Sigmoid colon (tissue), 7 donors: ENCODE measurements at regions of chr11 and their contacts with region 1.

Region 1: DNA sequence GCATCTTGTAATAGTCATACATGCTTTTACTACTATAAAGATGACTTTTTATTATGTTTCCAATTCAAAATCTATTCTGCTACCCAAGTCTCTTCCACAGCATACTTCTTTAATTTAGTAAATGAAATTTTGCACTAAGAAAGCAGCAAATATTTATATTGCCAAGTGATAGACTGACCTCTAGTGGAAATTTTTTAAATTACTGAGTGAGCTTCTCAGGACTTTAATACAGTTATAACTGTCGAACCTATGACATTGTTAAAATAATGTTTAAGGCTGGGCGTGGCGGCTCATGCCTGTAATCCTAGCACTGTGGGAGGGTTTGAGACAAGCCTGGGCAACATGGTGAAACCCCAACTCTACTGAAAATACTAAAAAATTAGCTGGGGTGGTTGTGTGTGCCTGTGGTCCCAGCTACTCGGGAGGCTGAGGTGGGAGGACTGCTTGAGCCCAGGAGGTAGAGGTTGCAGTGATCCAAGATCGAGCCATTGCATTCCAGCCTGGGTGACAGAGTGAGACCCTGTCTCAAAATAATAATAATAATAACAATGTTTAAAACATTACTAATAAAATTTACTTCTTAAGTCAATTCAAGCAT is 27.3 kb downstream of the STK33 start:
- DNase-seq: no peak
- H3K4me3 ChIP-seq: no peak overlapping the region
- H3K27ac ChIP-seq: no peak overlapping the region
- H3K4me1 ChIP-seq: no peaks in the 10 kb centered on the region
- H3K27me3 ChIP-seq: no peaks in the 10 kb centered on the region
- CTCF ChIP-seq: peak; percentile 44 to 65 (median 54)
- EP300 ChIP-seq: no peak
- POLR2A ChIP-seq: no peak

Region 2: DNA sequence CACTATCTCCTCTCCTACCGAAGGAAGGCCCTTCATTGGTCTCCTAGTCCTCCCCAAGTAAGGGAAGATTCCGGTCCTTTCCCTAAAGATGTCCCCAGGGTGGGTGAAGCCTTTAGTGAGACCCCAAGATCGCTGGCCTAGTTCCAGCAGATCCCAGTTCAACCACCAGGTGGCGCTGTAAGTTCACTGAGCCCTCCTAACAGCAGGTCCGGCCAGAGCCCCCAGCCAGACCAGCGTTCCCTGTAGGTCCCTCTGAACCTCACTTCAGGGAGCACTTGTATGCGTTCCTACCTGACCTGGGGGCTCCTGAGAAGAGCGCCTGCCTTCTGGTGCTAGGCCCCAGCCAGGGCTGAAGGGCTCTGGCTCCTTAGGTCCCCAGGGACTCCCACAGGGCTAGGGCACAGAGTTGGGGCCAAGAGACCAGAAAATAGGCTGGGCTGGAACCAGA is 341.1 kb before region 1 on chr11:
- intact Hi-C with region 1: loop called (anchors 1 kb)
- DNase-seq: peak; percentile 83
- H3K4me3 ChIP-seq: no peak overlapping the region
- H3K27ac ChIP-seq: no peak overlapping the region
- H3K4me1 ChIP-seq: peaks cover 0 to 13% (median 3%) of the 10 kb centered on the region in 4 donors
- H3K27me3 ChIP-seq: no peaks in the 10 kb centered on the region
- CTCF ChIP-seq: peak; percentile 78 to 96 (median 90)
- EP300 ChIP-seq: no peak
- POLR2A ChIP-seq: no peak

Region 3: DNA sequence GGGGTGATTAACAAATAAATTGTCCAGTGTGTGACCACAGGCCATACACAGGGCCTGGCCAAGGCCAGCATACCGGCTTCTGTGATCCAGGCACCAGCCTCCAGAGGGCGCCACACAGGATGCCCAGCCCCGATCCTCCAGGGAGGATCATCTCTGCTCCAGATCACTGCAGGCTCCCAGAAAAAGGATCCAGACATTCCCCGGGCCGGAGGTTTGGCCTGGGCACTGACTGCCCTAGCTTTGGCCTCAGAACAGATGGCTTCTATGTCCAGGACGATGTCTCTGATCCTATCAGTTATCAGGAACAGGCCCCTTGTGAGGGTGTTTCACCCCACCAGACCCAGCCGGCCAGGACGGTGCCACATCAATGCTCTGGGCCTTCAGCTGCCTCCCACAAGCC is 228.6 kb before region 1 on chr11:
- intact Hi-C with region 1: loop called (anchors 5 kb)
- DNase-seq: no peak
- H3K4me3 ChIP-seq: no peak overlapping the region
- H3K27ac ChIP-seq: no peak overlapping the region
- H3K4me1 ChIP-seq: no peaks in the 10 kb centered on the region
- H3K27me3 ChIP-seq: no peaks in the 10 kb centered on the region
- CTCF ChIP-seq: peak in 3 of 4 experiments; percentile 29 to 60 (median 45)
- EP300 ChIP-seq: no peak
- POLR2A ChIP-seq: no peak

Region 4: DNA sequence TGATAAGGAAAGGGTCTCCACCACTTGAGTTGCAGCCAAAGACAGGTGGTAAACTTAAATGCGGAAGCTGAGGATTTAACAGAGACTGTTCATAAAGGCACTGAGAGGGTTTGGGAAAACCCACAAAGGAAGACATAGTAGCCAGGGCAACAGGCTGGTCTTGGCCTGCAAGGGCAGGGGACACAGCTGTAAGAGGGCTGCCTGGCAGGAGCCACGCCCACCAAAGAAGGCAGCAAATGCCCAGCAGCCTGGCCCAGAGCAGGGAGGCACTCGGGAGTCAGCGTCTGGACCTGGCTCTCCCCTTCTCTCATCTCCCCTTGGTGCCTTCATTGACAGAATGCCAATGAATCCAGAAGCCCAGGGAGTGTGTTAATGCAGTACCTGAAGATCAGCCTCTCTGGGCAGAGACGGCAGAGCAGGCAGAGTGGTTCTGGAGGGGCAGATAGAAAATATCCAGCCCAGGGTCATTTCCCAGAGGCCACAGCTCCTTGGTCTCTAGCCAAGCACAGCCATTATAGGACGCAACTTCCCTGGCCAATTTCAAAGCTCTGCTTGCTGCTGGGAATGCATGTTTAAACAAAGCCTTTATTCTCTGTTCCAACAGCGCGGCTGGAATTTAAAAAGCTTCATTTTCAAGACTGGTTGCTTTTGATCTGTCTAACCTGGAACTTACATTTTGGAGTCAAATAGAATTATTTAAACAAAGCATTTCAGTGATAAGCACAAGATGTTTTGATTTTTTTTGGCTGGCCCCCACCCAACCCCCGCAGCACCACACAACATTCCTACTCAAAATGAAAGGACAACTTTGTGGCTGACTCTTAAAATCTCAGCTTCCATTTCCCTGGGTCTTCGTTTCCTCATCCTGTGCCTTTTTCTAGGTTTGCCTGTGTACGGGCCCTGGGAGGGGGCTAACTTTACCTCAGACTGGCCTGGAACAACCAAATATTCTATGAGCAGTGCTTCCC is 177.4 kb before region 1 on chr11:
- intact Hi-C with region 1: loop called (anchors 5 kb)
- DNase-seq: no peak
- H3K4me3 ChIP-seq: peak overlapping the region in 3 of 4 donors; percentile 17 to 31 (median 31)
- H3K27ac ChIP-seq: peak overlapping the region; percentile 56 to 82 (median 78)
- H3K4me1 ChIP-seq: peaks cover 0 to 20% (median 13%) of the 10 kb centered on the region in 4 donors
- H3K27me3 ChIP-seq: no peaks in the 10 kb centered on the region
- CTCF ChIP-seq: no peak
- EP300 ChIP-seq: no peak
- POLR2A ChIP-seq: no peak